ENCODE measurements at regions of chr3 and their contacts with region 1.

Region 1: GRCh38 chr3:134754768-134755559 is 40.1 kb upstream of the EPHB1 start:
- DNase-seq: peak; percentile 66 to 69
- H3K4me3 ChIP-seq: no peak overlapping the region
- H3K27ac ChIP-seq: no peak overlapping the region
- H3K4me1 ChIP-seq: no peaks in the 10 kb centered on the region
- H3K27me3 ChIP-seq: no peaks in the 10 kb centered on the region
- CTCF ChIP-seq: peak; percentile 22 to 70 (median 51)
- POLR2A ChIP-seq: no peak

Region 2: GRCh38 chr3:134590766-134591165 is 164.2 kb before region 1 on chr3:
- intact Hi-C with region 1: no loop called
- DNase-seq: no peak
- H3K4me3 ChIP-seq: no peak overlapping the region
- H3K27ac ChIP-seq: no peak overlapping the region
- H3K4me1 ChIP-seq: no peaks in the 10 kb centered on the region
- H3K27me3 ChIP-seq: no peaks in the 10 kb centered on the region
- CTCF ChIP-seq: no peak
- POLR2A ChIP-seq: no peak

Region 3: DNA sequence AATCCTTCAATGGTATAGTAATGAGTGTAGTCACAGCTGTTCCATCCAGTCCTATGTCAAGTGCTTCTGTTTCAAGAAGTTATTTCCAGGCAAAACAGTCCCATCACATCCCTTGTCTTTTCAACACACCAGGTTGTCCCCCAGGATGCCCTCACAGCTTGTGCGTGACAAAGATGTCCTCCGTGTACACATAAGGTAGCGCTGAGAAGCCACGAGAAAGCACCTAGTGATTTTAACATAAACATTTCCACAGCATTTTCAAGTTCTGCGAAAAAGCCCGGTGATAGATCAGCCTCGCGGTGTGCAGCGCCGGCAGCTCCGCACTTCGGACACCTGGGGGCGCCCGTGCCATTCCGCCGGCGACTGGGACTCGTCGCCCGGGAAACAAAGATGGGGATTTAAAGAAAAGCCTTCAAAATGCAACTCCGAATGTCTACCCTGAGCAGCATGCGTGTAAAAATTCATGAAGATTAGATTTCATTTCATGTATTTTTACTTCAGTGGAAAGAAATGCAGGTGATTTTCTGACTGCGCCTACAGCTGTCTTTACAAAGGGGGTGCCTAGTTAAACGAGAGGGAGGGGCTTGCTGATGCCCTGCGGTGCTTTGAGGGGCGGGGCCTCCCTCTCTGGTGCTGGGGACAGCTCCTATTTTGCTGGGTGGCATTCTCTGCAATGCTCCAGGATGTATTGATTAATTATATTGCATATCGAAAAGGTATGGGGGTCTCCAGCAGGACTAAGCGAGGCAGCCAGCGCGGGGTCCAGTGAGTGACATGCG is 154.1 kb before region 1 on chr3:
- intact Hi-C with region 1: loop called (anchors 5 kb)
- DNase-seq: peak; percentile 67 to 72
- H3K4me3 ChIP-seq: no peak overlapping the region
- H3K27ac ChIP-seq: no peak overlapping the region
- H3K4me1 ChIP-seq: peaks cover 4 to 11% of the 10 kb centered on the region in 2 donors
- H3K27me3 ChIP-seq: no peaks in the 10 kb centered on the region
- CTCF ChIP-seq: peak; percentile 75 to 98 (median 90)
- POLR2A ChIP-seq: no peak

Region 4: DNA sequence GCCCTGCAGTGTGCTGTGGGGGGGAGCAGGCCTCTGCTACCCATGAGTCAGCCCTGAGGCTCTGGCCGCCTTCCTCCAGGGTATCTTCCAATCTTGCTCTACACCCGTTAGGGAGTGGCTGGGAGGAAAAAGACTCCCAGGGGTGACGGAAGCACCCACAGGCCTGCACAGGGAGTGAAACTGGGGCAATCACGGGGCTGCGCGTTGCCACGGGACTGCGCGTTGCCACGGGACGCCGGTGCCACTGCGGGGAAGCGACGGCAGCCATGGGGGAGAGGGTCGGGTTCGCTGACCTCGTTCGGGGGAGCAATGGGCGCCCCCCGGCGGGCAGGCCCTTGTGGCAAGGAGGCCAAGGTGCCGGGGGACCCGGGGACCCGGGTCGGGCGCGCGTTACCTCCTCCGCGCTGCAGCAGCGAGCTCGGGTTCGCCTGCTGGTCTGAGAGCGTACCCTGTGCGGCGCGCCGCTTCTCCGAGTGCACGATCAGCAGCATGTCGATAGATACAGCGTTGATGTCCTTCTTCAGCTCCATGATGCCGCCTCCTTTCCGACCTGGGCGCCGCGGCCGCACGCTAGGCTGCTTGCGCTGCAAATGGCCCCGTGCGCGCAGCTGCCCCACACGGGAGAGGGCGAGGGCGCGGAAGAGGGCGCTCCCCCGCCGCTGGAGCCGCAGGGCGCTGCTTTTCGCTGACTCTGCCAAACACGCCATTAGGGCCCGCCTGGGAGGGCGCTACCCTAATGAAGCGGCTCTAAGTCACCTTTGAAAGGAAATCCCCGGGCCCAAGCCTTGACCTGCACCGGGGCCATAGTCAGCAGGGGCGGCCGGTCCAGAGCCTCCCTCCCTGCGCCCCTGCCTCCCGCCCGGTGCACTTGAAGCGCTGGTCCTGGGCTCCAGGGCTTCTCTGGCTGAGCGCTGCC is 104.3 kb before region 1 on chr3 and contains the start of gene KY:
- intact Hi-C with region 1: no loop called
- DNase-seq: peak; percentile 80 to 85
- H3K4me3 ChIP-seq: peak within 1 kb of the TSS; percentile 18 to 33 (median 30)
- H3K27ac ChIP-seq: peak within 1 kb of the TSS; percentile 79 to 91 (median 88)
- H3K4me1 ChIP-seq: peaks cover 11 to 19% of the 10 kb centered on the region in 2 donors
- H3K27me3 ChIP-seq: no peaks in the 10 kb centered on the region
- CTCF ChIP-seq: peak in 3 of 6 experiments; percentile 20 to 36 (median 29)
- POLR2A ChIP-seq: peak in 1 of 2 donors; percentile 58
- total RNA-seq, gene KY: 3.2 to 10.2 (median 7.2) TPM